Heart left ventricle (tissue), 16 donors: ENCODE measurements at regions of chr9 and their contacts with region 1.

Region 1: GRCh38 chr9:89919169-89919681 is 314.4 kb downstream of the GADD45G start:
- DNase-seq: peak in 4 of 5 donors; percentile 50 to 63 (median 58)
- ATAC-seq: peak; percentile 93 to 96 (median 94)
- H3K4me3 ChIP-seq: no peak overlapping the region
- H3K27ac ChIP-seq: no peak overlapping the region
- H3K4me1 ChIP-seq: peaks cover 0 to 12% (median 0%) of the 10 kb centered on the region in 12 donors
- H3K27me3 ChIP-seq: no peaks in the 10 kb centered on the region
- CTCF ChIP-seq: peak in 11 of 12 donors; percentile 25 to 68 (median 48)
- POLR2A ChIP-seq: no peak

Region 2: DNA sequence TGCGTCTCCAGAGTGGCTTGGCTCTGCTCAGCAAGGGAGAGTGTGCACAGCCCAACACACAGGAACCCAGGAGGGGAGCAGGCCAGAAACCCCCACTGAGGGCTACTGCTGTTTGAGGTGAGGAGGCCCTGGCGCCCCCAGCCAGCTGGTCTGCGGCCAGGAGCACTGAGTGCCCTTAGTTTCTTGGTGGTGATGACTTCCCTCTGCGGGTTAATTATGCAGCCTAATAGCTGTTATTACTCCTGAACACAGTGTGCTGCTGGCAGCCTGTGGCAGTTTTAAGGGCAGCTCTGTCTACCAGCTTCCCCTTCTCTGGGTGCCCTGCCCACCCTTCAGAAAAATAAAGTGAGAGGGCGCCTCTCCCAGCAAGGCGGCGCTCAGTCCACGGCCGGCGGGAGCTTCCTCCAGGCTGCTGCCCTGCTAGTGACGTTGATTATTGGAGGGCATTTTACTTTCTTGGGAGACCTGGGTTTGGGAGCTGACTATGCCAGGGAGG is 295.3 kb before region 1 on chr9:
- intact Hi-C with region 1: loop called in 1 of 10 experiments (anchors 5 kb)
- DNase-seq: peak; percentile 25 to 74 (median 46)
- ATAC-seq: peak; percentile 65 to 76 (median 68)
- H3K4me3 ChIP-seq: no peak overlapping the region
- H3K27ac ChIP-seq: peak overlapping the region; percentile 30 to 85 (median 72)
- H3K4me1 ChIP-seq: peaks cover 0 to 40% (median 20%) of the 10 kb centered on the region in 12 donors
- H3K27me3 ChIP-seq: no peaks in the 10 kb centered on the region
- CTCF ChIP-seq: peak in 3 of 12 donors; percentile 19 to 21 (median 19)
- POLR2A ChIP-seq: no peak

Region 3: GRCh38 chr9:89750147-89750861 is 168.9 kb before region 1 on chr9:
- intact Hi-C with region 1: loop called in 2 of 10 experiments (anchors 10 kb)
- DNase-seq: peak; percentile 58 to 78 (median 75)
- ATAC-seq: peak; percentile 5 to 78 (median 68)
- H3K4me3 ChIP-seq: no peak overlapping the region
- H3K27ac ChIP-seq: no peak overlapping the region
- H3K4me1 ChIP-seq: peaks cover 0 to 28% (median 5%) of the 10 kb centered on the region in 12 donors
- H3K27me3 ChIP-seq: no peaks in the 10 kb centered on the region
- CTCF ChIP-seq: no peak
- POLR2A ChIP-seq: no peak

Region 4: GRCh38 chr9:89808076-89808755 is 111.0 kb before region 1 on chr9:
- intact Hi-C with region 1: loop called in 1 of 10 experiments (anchors 10 kb)
- DNase-seq: no peak
- ATAC-seq: no peak
- H3K4me3 ChIP-seq: no peak overlapping the region
- H3K27ac ChIP-seq: peak overlapping the region in 1 of 12 donors; percentile 17
- H3K4me1 ChIP-seq: peaks cover 0 to 30% (median 4%) of the 10 kb centered on the region in 12 donors
- H3K27me3 ChIP-seq: peaks cover 0 to 7% (median 0%) of the 10 kb centered on the region in 9 donors
- CTCF ChIP-seq: peak in 3 of 12 donors; percentile 6 to 29 (median 11)
- POLR2A ChIP-seq: no peak